GM10248 (cell line): ENCODE measurements at regions of chr6 and their contacts with region 1.

Region 1: GRCh38 chr6:136643850-136644596 is 93.8 kb upstream of the MAP7 start:
- DNase-seq: peak; percentile 56
- CTCF ChIP-seq: peak; percentile 80

Region 2: GRCh38 chr6:136628996-136629395 is 15.0 kb before region 1 on chr6:
- CTCF ChIA-PET with region 1: interaction called, 78 read pairs
- POLR2A ChIA-PET with region 1: interaction called, 4 read pairs
- DNase-seq: no peak
- CTCF ChIP-seq: no peak

Region 3: GRCh38 chr6:136683209-136683941 is 39.4 kb after region 1 on chr6:
- CTCF ChIA-PET with region 1: interaction called, 19 read pairs
- POLR2A ChIA-PET with region 1: no interaction called
- DNase-seq: no peak
- CTCF ChIP-seq: no peak

Region 4: DNA sequence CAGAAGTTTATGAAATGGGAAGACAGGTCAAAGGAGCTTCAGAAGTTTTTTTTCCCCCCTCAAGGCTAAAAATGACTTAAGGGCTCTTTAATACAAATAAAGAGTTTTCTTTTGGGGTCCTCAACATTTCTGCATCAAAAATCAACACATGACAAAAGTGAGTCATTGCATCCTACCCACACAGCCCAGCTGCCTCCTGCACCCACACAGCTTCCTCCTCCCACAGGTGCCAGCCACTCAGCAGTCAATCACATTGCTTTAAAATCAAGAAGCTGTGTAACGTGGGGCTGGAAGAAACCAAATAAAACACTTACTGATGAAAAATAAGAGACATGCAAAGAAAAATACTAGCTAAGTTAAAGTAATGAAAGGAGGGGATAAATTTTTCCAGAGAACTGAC is 79.8 kb after region 1 on chr6:
- CTCF ChIA-PET with region 1: interaction called, 18 read pairs
- POLR2A ChIA-PET with region 1: no interaction called
- DNase-seq: no peak
- CTCF ChIP-seq: no peak

Region 5: DNA sequence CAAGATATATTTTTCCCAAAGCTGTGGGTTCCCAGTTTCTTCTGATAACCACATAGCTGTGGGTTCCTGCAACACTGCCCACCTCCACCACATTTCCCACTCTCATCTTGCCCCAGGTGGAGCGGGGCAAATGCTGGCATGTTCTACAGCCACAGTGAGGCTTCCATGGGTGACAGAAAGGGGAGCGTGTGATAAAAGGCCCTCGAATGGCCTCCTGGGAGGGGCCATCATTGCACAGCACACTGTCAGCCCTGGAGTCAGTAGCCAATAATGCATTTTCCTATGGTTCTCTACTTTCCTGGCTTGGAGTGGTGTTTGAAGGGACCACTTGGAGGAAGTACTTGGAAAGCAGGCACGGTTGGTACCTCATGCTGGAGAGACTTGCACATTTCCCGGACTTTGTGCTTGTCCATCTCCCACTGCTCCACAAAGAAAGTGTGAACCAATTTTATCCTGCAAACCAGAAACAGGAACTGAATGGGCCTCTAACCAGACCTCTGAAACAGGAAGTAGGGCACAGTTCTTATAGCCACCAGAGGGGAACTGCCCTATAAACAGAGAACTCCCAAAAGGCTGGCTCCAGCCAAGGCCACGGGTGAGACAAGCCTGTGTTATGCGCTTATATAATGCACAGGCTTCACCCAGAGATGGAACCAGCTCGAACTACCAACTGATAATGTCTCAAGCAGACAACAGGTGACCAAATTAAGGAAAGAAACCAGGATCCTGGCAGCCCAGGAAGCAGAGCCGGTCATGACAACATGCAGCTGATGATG is 139.7 kb after region 1 on chr6:
- CTCF ChIA-PET with region 1: interaction called, 348 read pairs
- POLR2A ChIA-PET with region 1: no interaction called
- DNase-seq: peak; percentile 58
- CTCF ChIP-seq: no peak

Region 6: GRCh38 chr6:136921936-136922684 is 278.1 kb after region 1 on chr6 and contains the start of gene SLC35D3:
- CTCF ChIA-PET with region 1: interaction called, 10 read pairs
- POLR2A ChIA-PET with region 1: no interaction called
- DNase-seq: peak; percentile 61
- CTCF ChIP-seq: no peak